GM12878 (cell line): ENCODE measurements at regions of chr4 and their contacts with region 1.

Region 1: GRCh38 chr4:40536032-40536431 is 93.6 kb downstream of the RBM47 start:
- DNase-seq: no peak
- ATAC-seq: peak; percentile 82
- H3K4me3 ChIP-seq: no peak overlapping the region
- H3K27ac ChIP-seq: peak overlapping the region; percentile 59
- H3K4me1 ChIP-seq: peaks cover 24% of the 10 kb centered on the region
- H3K27me3 ChIP-seq: no peaks in the 10 kb centered on the region
- CTCF ChIP-seq: no peak
- EP300 ChIP-seq: no peak
- POLR2A ChIP-seq: peak; percentile 18; the same call in 1 of the 2 replicates
- RAD21 ChIP-seq: no peak

Region 2: GRCh38 chr4:40521957-40522356 is 14.1 kb before region 1 on chr4:
- CTCF ChIA-PET with region 1: interaction called, 5 read pairs
- POLR2A ChIA-PET with region 1: interaction called, 5 read pairs
- RAD21 ChIA-PET with region 1: interaction called, 6 read pairs
- SMC1A ChIA-PET with region 1: interaction called, 12 read pairs
- in situ Hi-C with region 1: no loop called
- intact Hi-C with region 1: no loop called
- DNase-seq: no peak
- ATAC-seq: peak; percentile 24; the same call in 2 of the 3 replicates
- H3K4me3 ChIP-seq: no peak overlapping the region
- H3K27ac ChIP-seq: 0 out of 2 replicates have a peak overlapping the region, but pooled peaks have one; percentile 26
- H3K4me1 ChIP-seq: peaks cover 23% of the 10 kb centered on the region
- H3K27me3 ChIP-seq: no peaks in the 10 kb centered on the region
- CTCF ChIP-seq: no peak
- EP300 ChIP-seq: no peak
- POLR2A ChIP-seq: no peak
- RAD21 ChIP-seq: no peak